Activated CD4-positive, alpha-beta memory T cell treated with anti-CD3 and anti-CD28 coated beads, Interleukin-2, amount 10 ng/mL, durations not matched to agents 7 days and 5 days (primary cell): ENCODE measurements at regions of chrX and their contacts with region 1.

Region 1: DNA sequence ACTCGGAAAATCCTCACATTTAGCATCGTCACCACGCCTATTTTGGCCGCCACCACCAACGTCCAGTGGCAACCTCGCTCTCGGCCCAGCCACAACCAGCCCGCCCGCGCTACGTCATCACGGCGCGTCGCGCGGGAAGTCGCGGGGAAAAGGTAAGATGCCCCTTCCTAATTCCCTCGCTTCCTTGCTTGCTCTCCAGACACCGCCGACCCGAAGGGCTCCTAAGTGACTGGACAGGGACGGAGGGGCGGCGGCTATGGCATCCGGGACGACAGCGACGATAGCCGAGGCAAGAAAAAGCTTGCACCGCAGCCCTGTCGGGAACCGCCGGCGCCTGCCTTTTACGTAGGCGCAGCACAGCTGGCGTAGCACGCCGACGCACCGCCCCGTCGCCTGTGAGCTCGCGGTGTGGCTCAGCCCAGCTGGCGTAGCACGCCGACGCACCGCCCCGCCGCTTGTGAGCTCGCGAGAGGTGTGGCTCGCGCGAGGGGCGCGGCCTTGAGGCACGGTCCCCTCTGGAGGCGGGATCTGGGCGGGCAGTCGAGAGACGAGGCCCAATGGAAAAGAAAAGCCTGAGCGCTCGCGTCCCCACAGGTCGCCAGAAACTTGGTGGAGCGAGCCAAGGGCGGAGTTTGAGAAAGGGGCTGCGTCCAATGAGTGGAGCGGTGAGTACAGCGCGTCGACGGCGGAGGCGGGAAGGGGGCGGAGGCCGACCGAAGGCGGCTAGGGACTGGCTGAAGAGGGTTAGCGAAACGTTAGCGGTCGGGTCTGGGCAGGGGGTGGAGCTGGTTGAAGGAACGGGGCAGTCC is at the start of gene HDAC6:
- DNase-seq: peak; percentile 96
- H3K4me3 Mint-ChIP-seq: peak within 1 kb of the TSS; percentile 97
- H3K27ac Mint-ChIP-seq: peak within 1 kb of the TSS; percentile 99
- H3K4me1 Mint-ChIP-seq: peaks cover 29% of the 10 kb centered on the region
- H3K27me3 Mint-ChIP-seq: no peaks in the 10 kb centered on the region
- total RNA-seq, gene HDAC6: 89.0 to 90.3 TPM

Region 2: DNA sequence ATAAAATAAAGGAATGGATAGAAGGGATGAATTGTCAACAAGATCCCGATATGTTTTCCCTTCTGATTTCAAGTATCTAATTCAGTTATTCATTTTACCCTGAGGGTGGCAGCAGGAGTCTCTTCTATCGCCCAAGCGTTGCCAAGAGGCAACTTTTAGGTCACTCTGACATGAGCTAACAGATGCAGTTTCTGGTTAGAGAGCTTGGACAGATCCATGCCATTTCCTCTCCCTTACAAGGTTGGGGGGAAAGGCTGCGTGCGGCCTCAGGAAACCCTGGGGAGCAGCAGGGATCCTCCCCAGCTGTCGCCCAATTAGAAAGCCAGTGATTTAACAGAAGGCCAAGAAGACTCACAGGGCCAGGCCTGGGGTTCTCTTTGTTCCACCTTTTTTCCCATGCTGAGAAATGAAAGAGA is 153.1 kb before region 1 on chrX:
- CTCF ChIA-PET with region 1: interaction called, 10 read pairs
- POLR2A ChIA-PET with region 1: no interaction called
- DNase-seq: peak; percentile 32
- H3K4me3 Mint-ChIP-seq: no peak overlapping the region
- H3K27ac Mint-ChIP-seq: no peak overlapping the region
- H3K4me1 Mint-ChIP-seq: peaks cover 3% of the 10 kb centered on the region
- H3K27me3 Mint-ChIP-seq: no peaks in the 10 kb centered on the region

Region 3: GRCh38 chrX:48683411-48683982 is 118.0 kb before region 1 on chrX and contains the start of gene WAS:
- CTCF ChIA-PET with region 1: no interaction called
- POLR2A ChIA-PET with region 1: interaction called, 23 read pairs
- DNase-seq: peak; percentile 64
- H3K4me3 Mint-ChIP-seq: peak within 1 kb of the TSS; percentile 90
- H3K27ac Mint-ChIP-seq: peak within 1 kb of the TSS; percentile 85
- H3K4me1 Mint-ChIP-seq: peaks cover 69% of the 10 kb centered on the region
- H3K27me3 Mint-ChIP-seq: no peaks in the 10 kb centered on the region
- total RNA-seq, gene WAS: 156 to 157 TPM

Region 4: DNA sequence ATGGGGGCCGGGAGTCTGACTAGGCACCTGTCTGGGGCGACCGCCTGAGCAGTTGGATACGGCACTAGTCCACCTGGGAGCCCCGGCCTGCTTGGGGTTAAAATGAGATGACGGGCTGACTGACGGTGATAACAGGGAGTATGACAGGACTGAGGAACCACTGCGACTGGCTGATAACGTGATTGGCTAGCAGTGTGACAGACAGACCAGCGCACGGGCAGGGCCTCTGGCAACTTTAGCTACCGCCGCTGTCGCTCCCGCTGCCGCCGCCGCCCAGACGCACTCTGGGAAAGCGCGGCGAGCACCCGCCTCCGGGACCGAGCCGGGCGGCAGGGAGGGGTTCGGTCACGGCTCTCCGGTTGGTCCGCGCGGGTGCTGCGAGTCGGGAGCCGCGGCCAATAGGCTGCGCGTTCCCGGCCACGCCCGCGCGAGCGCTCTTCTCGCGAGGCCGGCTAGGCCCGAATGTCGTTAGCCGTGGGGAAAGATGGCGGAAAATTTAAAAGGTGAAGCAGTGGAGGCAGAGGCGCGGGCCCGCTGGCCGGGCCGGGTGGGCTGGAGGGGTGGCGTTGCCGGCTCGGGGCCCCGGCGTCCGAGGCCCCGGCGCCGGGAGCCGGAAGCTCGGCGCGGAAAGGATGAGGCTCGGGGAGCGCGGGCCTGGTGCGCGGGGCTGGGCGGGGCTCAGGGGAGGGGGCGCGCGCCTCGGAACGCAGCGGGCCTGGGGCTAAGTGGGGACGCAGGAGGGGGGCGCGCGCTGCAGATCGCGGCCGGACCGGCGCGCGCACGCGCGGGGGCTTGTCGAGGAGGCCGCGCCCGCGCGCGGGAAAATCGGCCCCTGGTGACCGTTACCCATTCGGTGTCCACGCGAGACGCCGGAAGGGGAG is 104.9 kb before region 1 on chrX and contains the start of gene SUV39H1:
- CTCF ChIA-PET with region 1: no interaction called
- POLR2A ChIA-PET with region 1: interaction called, 24 read pairs
- DNase-seq: peak; percentile 89
- H3K4me3 Mint-ChIP-seq: peak within 1 kb of the TSS; percentile 90
- H3K27ac Mint-ChIP-seq: peak within 1 kb of the TSS; percentile 97
- H3K4me1 Mint-ChIP-seq: peaks cover 49% of the 10 kb centered on the region
- H3K27me3 Mint-ChIP-seq: no peaks in the 10 kb centered on the region
- total RNA-seq, gene SUV39H1: 30.3 to 33.2 TPM

Region 5: DNA sequence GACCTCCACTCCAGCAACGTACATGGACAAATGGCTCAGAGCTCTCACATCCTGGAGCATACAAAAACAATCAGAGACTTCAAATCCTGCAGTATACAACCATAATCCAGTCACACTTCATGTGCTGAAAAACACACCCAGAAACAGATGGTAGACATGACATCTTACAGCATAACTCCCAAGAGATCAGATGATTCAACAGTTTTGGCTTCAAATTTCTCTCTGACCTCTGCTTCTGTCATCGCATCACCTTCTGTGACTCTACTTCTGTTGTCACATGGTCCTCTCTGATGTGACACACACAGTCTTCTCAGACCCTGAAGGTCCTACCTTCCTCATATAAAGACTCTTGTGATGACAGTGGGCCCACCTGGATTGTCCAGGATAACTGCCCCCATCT is 86.4 kb before region 1 on chrX:
- CTCF ChIA-PET with region 1: no interaction called
- POLR2A ChIA-PET with region 1: interaction called, 13 read pairs
- DNase-seq: no peak
- H3K4me3 Mint-ChIP-seq: peak overlapping the region; percentile 74
- H3K27ac Mint-ChIP-seq: peak overlapping the region; percentile 98
- H3K4me1 Mint-ChIP-seq: peaks cover 74% of the 10 kb centered on the region
- H3K27me3 Mint-ChIP-seq: no peaks in the 10 kb centered on the region

Region 6: DNA sequence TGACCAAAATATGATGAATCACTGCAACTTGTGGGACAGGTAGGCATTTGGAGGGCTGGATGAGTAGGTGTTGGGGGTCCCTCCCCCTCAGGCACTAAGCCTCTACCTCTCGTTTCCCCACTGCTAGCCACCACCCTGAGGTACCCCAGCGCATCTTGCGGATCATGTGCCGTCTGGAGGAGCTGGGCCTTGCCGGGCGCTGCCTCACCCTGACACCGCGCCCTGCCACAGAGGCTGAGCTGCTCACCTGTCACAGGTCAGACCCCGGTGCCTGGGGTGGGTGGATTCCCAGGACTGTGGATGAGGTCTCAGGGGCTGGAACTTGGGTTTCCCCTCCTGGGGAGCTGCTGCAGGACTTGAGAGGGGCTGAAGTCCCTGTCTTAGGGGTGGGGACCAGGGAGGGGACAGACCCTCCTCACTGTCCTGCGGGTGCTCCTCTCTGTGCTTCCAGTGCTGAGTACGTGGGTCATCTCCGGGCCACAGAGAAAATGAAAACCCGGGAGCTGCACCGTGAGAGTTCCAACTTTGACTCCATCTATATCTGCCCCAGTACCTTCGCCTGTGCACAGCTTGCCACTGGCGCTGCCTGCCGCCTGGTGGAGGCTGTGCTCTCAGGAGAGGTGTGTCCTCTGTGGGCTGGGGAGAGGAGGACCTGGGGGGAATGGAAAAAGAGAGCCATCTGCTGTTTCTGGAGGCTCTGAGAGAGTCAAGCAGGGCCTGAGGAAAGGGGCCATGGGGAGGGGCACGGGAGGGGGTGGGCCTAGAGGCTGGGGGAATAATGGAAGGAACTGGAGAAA is 14.7 kb after region 1 on chrX:
- CTCF ChIA-PET with region 1: no interaction called
- POLR2A ChIA-PET with region 1: no interaction called
- DNase-seq: no peak
- H3K4me3 Mint-ChIP-seq: no peak overlapping the region
- H3K27ac Mint-ChIP-seq: no peak overlapping the region
- H3K4me1 Mint-ChIP-seq: no peaks in the 10 kb centered on the region
- H3K27me3 Mint-ChIP-seq: no peaks in the 10 kb centered on the region